WTC11 (cell line): ENCODE measurements at regions of chr9 and their contacts with region 1.

Region 1: DNA sequence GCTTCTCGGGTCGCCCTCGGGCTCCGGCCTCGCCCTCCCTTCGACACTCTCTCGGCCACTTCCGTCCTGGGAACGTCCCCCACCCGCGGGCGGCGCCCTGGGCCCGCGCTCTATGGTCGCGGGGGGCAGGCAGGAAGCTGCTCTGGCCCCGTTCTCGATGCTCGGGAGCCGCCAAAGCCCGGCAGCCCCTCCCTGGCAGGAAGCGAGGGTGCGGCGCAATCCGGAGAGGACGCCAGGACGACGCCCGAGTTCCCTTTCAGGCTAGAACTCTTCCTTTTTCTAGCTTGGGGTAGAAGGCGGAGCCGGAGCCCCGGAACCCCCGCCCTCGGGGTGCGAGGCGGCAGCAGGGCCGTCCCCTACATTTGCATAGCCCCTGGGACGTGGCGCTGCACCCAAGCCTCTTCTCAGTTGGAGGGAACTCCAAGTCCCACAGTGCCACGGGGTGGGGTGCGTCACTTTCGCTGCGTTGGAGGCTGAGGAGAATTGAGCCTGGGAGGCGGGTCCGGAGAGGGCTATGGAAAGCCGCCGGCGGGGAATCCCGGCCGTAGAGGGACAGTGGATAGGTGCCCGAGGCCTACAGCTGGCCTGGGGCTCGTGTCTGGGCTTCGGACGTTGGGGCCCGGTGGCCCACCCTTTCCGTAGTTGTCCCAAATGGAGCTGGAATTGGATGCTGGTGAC is at the starts of genes CREB3 and TLN1:
- DNase-seq: peak; percentile 95
- ATAC-seq: peak; percentile 72
- H3K4me3 Mint-ChIP-seq: peak within 1 kb of the TSS; percentile 90
- H3K27ac Mint-ChIP-seq: peak within 1 kb of the TSS; percentile 95
- H3K4me1 Mint-ChIP-seq: peaks cover 14% of the 10 kb centered on the region
- H3K27me3 Mint-ChIP-seq: no peaks in the 10 kb centered on the region
- CTCF ChIP-seq: no peak
- total RNA-seq, gene CREB3: 21.4 to 24.2 TPM (median 23.1 TPM) in 3 replicates
- total RNA-seq, gene TLN1: 97.1 to 109 TPM (median 106 TPM) in 3 replicates

Region 2: DNA sequence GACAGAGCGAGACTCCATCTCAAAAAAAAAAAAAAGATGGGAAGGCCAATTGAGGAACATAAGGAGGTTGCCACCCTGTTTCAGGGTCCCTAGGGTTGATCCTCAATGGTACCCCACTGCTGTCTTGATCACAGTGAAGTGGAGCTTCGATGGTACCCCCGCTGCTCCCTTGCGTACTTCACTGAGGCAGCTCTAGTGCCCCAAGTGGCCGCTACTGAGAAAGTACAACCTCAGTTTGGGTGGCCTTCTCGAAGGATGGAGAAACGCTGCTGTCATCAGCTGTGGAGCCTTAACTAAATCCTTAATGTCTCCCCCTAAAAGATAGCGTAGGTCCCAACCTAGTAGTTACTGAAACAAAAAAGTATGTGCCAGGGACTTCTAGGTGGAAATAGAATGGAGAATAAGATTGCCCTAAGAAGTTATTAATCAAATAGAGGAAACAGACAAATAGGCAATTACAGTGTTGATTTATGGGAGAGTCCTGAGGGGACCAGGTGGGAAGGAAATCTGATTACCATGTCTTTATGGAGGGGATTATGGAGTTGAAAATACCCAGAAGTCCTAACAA is 120.9 kb before region 1 on chr9:
- CTCF ChIA-PET with region 1: interaction called, 14 read pairs
- POLR2A ChIA-PET with region 1: interaction called, 3 read pairs
- DNase-seq: peak; percentile 63
- ATAC-seq: peak; percentile 87
- H3K4me3 Mint-ChIP-seq: no peak overlapping the region
- H3K27ac Mint-ChIP-seq: no peak overlapping the region
- H3K4me1 Mint-ChIP-seq: peaks cover 9% of the 10 kb centered on the region
- H3K27me3 Mint-ChIP-seq: peaks cover 36% of the 10 kb centered on the region
- CTCF ChIP-seq: peak; percentile 52

Region 3: DNA sequence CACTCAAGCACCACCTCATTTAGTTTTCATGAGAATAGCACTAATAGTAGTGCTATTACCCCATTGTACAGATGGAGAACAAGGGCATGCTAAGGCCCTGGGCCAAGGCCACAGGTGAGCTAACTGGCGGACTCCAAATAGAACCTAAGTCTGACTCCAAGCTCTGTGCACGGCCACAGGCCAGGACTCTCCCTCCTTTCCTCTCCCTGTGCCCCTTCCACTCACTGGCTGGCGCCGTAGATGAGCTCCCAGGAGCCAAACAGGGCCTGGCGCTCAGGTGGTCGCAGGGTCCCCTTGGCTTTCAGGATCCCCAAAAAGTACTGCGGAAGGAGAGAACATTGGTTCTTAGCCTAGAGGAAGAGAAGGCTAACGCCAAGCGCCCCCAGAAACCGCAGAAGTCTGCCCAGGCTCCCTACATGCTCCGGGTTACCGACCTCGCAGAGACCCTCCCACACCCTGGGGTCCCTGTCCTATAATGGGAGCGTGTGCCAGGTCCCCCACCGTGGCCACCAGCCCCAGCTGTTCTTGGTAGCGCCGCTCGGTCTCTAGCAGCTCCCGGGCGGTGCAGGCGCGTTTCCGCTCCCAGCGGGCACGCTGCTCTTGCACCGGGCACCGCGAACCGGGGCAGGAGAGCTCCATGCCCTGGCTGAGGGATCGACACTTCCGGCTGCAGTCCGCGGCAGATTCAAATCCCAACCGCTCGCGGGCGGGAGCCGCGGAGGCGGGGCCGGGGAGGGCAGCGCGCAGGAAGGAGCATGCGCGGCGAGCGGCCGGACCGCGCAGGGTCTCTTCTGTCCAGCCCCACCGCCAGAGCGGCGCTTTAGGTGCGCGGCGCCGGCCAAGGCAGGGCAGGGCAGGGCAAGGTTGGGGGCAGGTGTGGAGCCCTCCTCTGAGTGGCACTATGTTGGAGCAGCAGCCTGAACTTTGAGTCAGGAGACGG is 67.5 kb before region 1 on chr9 and contains the start of gene ARHGEF39:
- CTCF ChIA-PET with region 1: interaction called, 24 read pairs
- POLR2A ChIA-PET with region 1: interaction called, 11 read pairs
- DNase-seq: peak; percentile 91
- ATAC-seq: peak; percentile 97
- H3K4me3 Mint-ChIP-seq: peak within 1 kb of the TSS; percentile 81
- H3K27ac Mint-ChIP-seq: peak within 1 kb of the TSS; percentile 71; the same call in 1 of the 2 replicates
- H3K4me1 Mint-ChIP-seq: peaks cover 24% of the 10 kb centered on the region
- H3K27me3 Mint-ChIP-seq: no peaks in the 10 kb centered on the region; the same call in 1 of the 2 replicates
- CTCF ChIP-seq: no peak
- total RNA-seq, gene ARHGEF39: 23.8 to 26.6 TPM (median 26.5 TPM) in 3 replicates

Region 4: DNA sequence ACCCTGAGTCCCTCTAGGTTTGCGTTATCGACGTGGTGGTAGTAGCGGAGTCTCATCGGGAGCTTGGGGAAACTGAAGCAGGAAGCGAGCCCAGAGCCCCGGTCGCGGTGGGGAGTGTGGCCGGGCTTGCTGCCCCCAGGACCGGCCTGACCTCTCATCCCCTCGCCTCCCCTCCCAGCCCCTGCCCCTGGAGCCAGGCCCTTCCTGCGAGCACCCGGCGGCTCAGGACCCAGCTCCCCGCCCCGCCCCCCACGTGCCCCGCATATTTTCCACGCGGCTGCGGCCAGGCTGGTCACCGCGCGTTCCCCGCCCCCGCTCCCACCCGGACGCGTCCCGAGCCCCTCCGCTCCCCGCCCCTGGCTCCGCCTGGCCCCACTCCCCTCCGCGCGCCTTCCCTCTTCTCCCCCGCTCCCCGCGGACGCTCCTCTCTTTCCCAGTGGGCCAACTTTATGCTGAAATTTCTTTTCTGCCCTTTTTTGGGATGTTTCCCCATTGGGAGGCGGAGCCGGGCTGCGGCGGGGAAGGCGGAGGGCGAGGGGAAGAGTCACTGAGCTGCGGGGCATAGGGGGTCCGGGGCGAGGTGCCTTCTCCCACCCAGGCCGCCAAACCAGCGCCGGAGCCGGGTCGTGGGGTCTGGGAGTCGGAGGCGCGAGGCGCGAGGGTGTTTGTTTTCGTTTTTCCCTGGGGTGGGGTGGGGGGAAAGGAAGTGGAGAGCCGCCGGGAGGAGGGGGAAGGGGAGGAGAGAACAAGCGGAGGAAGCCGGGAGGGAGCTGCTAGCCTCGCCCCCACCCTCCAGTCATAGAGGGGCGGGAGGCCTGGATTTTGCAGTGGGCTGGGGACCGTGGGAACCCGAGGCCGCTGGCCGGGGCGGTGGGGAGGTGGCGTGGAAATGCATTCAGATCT is 41.6 kb before region 1 on chr9:
- CTCF ChIA-PET with region 1: interaction called, 103 read pairs
- POLR2A ChIA-PET with region 1: interaction called, 14 read pairs
- DNase-seq: peak; percentile 64
- ATAC-seq: peak; percentile 40
- H3K4me3 Mint-ChIP-seq: peak overlapping the region; percentile 91
- H3K27ac Mint-ChIP-seq: no peak overlapping the region
- H3K4me1 Mint-ChIP-seq: peaks cover 23% of the 10 kb centered on the region
- H3K27me3 Mint-ChIP-seq: no peaks in the 10 kb centered on the region
- CTCF ChIP-seq: no peak

Region 5: GRCh38 chr9:35711501-35712428 is 20.5 kb before region 1 on chr9:
- CTCF ChIA-PET with region 1: interaction called, 12 read pairs
- POLR2A ChIA-PET with region 1: interaction called, 3 read pairs
- DNase-seq: no peak
- ATAC-seq: no peak
- H3K4me3 Mint-ChIP-seq: no peak overlapping the region
- H3K27ac Mint-ChIP-seq: no peak overlapping the region
- H3K4me1 Mint-ChIP-seq: no peaks in the 10 kb centered on the region
- H3K27me3 Mint-ChIP-seq: no peaks in the 10 kb centered on the region
- CTCF ChIP-seq: no peak

Region 6: DNA sequence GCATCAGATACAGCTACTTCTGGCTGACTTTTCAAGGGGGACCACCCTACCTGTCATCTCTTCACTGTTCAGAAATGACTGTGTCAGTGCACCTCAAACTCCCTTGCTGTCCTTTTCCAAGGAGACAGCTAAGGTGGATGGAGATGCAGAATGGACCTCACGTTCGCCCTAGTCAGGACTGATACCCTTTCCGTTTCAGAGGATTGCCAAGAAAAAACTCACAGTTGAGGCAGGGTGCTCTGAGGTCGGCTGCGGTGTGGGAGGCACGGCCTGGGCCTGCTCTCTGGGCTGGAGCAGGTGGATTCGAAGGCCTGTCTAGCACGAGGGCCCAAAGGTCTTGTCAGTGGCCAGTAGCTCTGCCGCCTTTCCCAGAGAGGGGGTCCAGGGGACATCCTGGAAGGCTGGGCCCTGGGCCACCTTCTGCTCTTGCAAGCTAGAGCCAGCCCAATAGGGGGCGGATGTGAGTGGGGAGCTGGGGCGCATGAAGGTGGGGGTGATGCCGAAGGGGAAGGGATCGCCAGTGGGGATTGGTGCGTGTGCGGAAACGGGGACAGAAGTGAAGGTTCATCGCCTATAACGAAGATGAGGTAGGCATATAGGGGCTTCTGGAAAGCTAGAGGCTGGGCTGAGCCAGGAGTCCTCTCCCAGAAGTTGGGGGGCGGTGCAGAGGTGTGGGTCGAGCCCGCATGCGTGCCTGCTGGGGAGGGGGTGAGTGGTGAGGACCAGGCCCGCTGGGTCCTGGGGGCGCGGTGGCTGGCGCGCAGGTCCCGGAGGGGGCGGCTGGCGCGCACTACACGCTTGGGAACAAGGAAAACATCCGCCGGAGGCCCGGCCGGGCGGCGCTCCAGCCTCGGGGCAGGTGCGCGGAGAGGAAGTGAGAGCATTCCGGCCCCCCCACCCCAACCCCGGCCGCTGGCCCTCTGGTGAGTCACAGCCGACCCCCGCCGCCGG is 24.3 kb after region 1 on chr9:
- CTCF ChIA-PET with region 1: interaction called, 27 read pairs
- POLR2A ChIA-PET with region 1: interaction called, 13 read pairs
- DNase-seq: peak; percentile 82
- ATAC-seq: peak; percentile 79
- H3K4me3 Mint-ChIP-seq: peak overlapping the region; percentile 89
- H3K27ac Mint-ChIP-seq: peak overlapping the region; percentile 93
- H3K4me1 Mint-ChIP-seq: peaks cover 26% of the 10 kb centered on the region
- H3K27me3 Mint-ChIP-seq: no peaks in the 10 kb centered on the region
- CTCF ChIP-seq: 0 out of 2 replicates have a peak, but pooled peaks have one; percentile 18